Endothelial cell of umbilical vein (primary cell): ENCODE measurements at regions of chr13 and their contacts with region 1.

Region 1: DNA sequence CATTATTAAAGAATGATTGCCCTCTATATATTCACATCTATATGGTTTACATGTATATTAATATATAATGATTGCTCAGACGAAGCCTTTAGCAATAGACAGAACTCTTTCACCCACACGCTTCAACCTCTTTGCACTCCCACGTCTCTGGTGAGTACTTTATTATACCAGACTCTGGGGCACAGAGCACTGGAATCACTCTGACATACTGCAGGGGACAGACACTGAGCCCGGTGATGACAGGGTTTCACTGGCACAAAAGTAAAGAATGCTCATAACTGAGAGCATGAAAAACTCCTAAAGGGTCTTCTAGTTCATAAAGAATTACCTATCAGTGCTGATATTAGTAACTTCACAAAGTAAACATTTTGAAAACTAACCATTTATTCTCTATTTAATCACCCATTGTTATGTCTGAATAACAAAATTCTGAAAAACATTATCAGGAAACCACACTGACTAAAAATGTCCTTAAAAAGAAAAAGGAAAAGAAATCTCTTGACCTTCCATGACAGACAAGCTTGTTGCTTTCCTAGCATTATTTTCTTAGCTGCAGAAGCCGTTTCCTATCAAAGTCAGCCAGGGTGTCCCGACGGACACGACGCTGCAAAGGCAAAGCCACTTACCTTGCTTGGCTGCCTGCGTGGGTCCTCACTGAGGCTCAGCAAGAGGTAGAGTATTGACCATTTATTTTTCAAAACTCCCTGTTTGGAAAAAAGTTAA is 29.1 kb downstream of the TUBGCP3 start:
- DNase-seq: peak; percentile 95
- H3K4me3 ChIP-seq: peak overlapping the region in 1 of 3 experiments; percentile 15
- H3K27ac ChIP-seq: peak overlapping the region; percentile 86
- H3K4me1 ChIP-seq: peaks cover 22% of the 10 kb centered on the region
- H3K27me3 ChIP-seq: no peaks in the 10 kb centered on the region
- CTCF ChIP-seq: no peak
- POLR2A ChIP-seq: peak; percentile 53

Region 2: GRCh38 chr13:112575675-112576074 is 16.8 kb after region 1 on chr13:
- CTCF ChIA-PET with region 1: interaction called, 4 read pairs
- POLR2A ChIA-PET with region 1: no interaction called
- dilution Hi-C with region 1: no loop called
- intact Hi-C with region 1: loop called (anchors 1 kb)
- DNase-seq: peak; percentile 31
- H3K4me3 ChIP-seq: no peak overlapping the region
- H3K27ac ChIP-seq: peak overlapping the region; percentile 89
- H3K4me1 ChIP-seq: peaks cover 35% of the 10 kb centered on the region
- H3K27me3 ChIP-seq: no peaks in the 10 kb centered on the region
- CTCF ChIP-seq: no peak
- POLR2A ChIP-seq: no peak